RWPE1 (cell line): ENCODE measurements at regions of chr5 and their contacts with region 1.

Region 1: GRCh38 chr5:95261437-95262175 is 23.3 kb downstream of the MCTP1 start:
- DNase-seq: peak; percentile 47
- H3K27ac ChIP-seq: no peak overlapping the region
- CTCF ChIP-seq: peak; percentile 74

Region 2: DNA sequence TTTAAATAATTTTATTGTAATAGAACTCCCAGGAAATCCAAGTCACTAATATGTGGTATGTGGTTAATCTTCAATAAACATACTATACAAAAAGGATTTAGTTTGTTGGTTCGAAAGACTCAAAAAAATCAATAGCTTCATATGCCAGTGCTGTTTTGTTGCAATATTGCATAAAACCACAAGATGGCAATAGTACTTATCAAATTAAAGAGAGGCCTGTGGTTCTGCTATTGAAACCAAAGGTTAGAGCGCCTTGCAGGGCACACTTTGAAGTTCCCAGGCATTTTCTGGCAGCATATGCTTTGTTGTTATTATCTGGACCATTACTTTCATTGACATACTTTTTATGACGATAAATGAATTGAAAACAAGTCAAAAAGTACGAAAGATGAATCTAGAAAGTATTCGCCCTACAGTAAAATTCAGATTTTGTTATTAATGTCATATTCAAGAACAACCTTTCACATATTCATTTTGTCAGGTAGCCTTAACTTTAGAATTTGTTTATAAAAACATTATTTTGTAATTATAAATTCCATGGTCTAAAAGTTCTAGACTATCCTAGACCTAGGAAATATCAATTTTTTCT is 293.0 kb before region 1 on chr5:
- CTCF ChIA-PET with region 1: interaction called, 11 read pairs
- POLR2A ChIA-PET with region 1: no interaction called
- DNase-seq: peak; percentile 52
- H3K27ac ChIP-seq: no peak overlapping the region
- CTCF ChIP-seq: peak; percentile 87